GM10248 (cell line): ENCODE measurements at regions of chr11 and their contacts with region 1.

Region 1: GRCh38 chr11:120303004-120303637 is 22.0 kb upstream of the TLCD5 start:
- DNase-seq: peak; percentile 82
- CTCF ChIP-seq: peak; percentile 92

Region 2: GRCh38 chr11:120182790-120183491 is 120.2 kb before region 1 on chr11:
- CTCF ChIA-PET with region 1: interaction called, 17 read pairs
- POLR2A ChIA-PET with region 1: no interaction called
- DNase-seq: no peak
- CTCF ChIP-seq: peak; percentile 38

Region 3: DNA sequence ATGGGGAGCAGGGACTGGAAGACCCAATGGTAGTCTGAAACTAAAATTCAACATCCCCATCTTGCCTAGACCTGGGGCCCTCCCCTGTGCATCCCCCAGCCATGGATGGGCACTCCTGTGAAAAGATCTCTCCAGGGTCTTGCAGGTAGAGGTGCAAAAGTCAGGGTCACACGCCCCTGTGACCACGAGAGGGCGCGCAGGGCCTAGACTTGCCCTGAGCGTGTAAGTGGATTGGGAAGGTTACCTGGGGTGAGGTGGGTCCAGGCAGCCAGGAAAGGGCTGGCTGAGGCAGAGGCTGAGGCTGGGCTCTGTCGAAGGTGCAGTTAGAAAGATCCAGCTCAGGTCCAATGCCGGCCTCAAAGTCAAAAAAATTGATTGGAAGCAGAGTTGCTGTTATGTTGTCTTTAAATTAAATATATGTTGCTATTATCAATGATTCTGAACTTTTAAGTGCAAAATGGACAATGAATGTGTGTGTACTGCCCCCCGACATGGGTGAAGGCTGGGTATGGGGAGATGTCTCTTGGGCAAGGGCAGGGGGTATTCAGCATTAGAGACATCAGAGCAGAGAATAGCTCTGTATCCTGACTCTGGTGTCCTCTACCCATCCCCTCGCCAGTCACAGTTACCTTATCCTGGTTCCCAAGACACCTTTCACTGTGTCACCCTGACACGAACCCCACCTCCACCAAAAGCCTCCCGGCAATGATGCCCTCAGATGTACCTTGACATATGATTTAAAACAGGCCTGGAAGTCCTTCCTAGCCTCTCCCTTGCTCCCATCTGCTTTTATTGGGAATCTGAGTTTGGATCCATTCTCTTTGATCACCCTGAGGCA is 67.9 kb before region 1 on chr11:
- CTCF ChIA-PET with region 1: interaction called, 792 read pairs
- POLR2A ChIA-PET with region 1: no interaction called
- DNase-seq: peak; percentile 83
- CTCF ChIP-seq: peak; percentile 93

Region 4: GRCh38 chr11:120273448-120273847 is 29.7 kb before region 1 on chr11:
- CTCF ChIA-PET with region 1: interaction called, 53 read pairs
- POLR2A ChIA-PET with region 1: no interaction called
- DNase-seq: no peak
- CTCF ChIP-seq: no peak

Region 5: DNA sequence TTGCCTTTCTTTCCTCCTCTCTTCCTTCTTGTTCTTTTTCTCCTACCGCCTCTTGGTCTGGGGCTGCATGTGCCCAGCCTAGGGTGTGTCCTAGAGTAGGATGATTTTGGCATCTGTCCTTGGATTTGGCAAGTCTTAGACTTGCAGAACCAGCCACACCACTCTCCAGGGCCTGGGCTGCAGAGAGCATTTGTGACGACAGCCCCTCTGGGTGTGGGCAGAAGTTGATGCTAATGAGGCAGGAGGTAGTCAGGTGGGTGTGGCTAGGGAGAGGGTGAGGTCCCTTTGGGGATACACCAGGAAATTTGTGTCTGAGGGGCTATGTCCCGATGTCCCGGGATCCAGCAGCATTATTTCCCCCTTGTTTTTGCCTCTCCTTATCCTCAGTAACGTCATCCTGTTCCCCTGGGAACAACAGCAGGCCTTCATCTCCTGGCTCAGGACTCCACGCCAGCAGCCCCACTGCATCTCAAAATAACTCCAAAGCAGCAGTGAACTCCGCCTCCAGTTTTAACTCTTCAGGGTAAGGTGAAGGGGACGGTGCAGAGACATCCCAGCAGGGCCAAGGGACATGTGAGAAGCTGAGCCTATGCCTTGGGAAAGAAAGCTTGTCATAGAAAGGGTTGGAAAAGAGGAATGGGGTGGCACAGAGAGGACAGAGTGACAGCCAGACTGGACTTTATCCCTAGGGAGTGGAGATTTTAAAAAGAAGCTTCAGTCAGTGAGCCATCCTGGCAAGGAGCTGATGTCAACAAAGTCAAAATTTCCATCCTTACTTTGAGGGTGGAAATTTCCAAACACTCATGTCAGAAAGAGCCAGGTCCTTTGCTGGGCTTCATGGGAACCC is 13.9 kb after region 1 on chr11:
- CTCF ChIA-PET with region 1: interaction called, 97 read pairs
- POLR2A ChIA-PET with region 1: no interaction called
- DNase-seq: no peak
- CTCF ChIP-seq: no peak

Region 6: GRCh38 chr11:120335908-120336640 is 33.0 kb after region 1 on chr11 and contains the start of gene ARHGEF12:
- CTCF ChIA-PET with region 1: interaction called, 10 read pairs
- POLR2A ChIA-PET with region 1: no interaction called
- DNase-seq: peak; percentile 92
- CTCF ChIP-seq: peak; percentile 43